Mammary epithelial cell (primary cell): ENCODE measurements at regions of chr10 and their contacts with region 1.

Region 1: GRCh38 chr10:3811291-3811870 is 26.4 kb upstream of the KLF6 start:
- DNase-seq: peak; percentile 98
- H3K4me3 ChIP-seq: no peak overlapping the region
- H3K27ac ChIP-seq: peak overlapping the region; percentile 100
- H3K4me1 ChIP-seq: peaks cover 50% of the 10 kb centered on the region
- H3K27me3 ChIP-seq: no peaks in the 10 kb centered on the region
- CTCF ChIP-seq: no peak

Region 2: DNA sequence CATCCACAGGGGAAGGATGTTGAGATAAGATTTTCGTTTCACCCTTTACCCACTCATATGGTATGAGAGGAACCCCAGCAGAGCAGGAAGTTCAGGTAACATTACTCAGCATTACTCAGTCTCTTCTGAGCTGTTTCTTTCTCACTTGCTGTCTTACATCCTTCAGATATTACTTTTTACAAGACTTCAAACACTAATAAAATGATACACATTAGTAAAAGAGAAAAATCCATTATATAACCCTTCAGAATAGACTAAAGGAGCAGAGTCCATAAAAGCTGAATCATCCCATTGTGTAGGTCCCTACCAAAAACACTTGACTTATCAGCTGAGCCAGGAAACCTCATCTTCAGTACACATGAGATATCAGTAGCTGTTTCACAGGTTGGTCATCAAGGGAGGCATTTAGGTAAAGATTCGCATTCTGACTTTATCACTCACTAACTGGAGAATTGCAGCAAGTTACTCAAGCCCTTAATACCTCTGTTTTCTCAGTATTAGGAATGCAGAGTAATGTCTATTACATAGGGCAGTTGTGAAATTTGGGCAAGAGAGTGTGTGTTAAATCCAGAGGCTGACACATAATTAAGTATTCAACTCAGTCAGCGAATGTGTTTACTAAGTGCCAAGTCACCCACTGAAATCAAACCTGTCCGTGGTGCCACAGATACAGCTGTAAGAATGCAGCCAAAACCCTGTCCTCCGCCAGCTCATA is 71.1 kb before region 1 on chr10:
- CTCF ChIA-PET with region 1: no interaction called
- dilution Hi-C with region 1: no loop called
- in situ Hi-C with region 1: no loop called
- intact Hi-C with region 1: loop called (anchors 1 kb)
- DNase-seq: peak; percentile 95
- H3K4me3 ChIP-seq: no peak overlapping the region
- H3K27ac ChIP-seq: peak overlapping the region; percentile 81
- H3K4me1 ChIP-seq: peaks cover 22% of the 10 kb centered on the region
- H3K27me3 ChIP-seq: no peaks in the 10 kb centered on the region
- CTCF ChIP-seq: no peak

Region 3: GRCh38 chr10:3828404-3829155 is 17.2 kb after region 1 on chr10:
- CTCF ChIA-PET with region 1: no interaction called
- dilution Hi-C with region 1: no loop called
- in situ Hi-C with region 1: no loop called
- intact Hi-C with region 1: loop called (anchors 1 kb)
- DNase-seq: peak; percentile 58
- H3K4me3 ChIP-seq: peak overlapping the region in 2 of 3 experiments; percentile 45 to 48
- H3K27ac ChIP-seq: peak overlapping the region; percentile 71
- H3K4me1 ChIP-seq: peaks cover 25% of the 10 kb centered on the region
- H3K27me3 ChIP-seq: no peaks in the 10 kb centered on the region
- CTCF ChIP-seq: no peak

Region 4: DNA sequence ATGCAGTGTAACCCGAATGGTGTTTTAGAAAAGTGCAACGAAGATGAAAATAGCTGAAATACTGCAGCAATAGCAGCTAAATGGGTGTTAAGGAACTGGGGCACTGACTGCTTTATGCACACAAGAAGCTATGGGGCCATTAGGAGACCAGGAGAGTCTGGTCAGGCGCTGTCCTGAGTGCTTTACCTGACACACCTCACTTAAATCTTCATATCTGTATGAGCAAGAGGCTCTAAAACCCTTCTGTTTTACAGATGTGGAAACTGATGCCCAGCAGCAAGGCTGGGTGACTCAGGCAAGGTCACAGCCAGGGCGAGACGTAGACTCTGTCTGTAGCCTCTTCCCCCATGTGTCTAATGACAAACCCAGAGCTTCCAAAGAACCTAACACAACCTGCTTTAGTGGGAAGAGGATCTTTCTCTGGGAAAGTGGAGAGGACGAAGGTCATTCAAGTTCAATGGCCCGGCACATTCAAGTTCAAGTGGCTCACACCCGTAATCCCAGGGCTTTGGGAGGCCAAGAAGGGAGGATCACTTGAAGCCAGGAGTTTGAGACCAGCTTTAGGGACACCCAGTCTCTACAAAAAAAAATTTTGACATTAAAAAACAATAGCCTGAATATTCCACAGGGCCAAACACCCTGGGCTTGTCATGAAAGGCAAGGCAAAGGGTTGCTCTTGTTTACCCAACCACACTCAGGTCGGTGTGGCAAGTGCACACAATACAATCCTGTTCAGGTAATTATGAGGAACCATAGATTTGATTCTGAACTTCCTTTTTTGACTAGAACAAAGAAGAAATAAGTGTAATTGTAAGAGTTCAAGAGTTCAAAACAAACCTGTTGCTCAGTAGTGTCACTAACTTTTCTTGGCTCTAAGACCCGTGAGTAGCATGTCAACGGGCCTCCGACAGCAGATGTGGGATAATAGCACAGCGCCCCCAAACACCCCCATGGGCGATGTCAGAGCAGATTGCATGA is 27.4 kb after region 1 on chr10:
- CTCF ChIA-PET with region 1: no interaction called
- dilution Hi-C with region 1: no loop called
- in situ Hi-C with region 1: no loop called
- intact Hi-C with region 1: no loop called
- DNase-seq: peak; percentile 36
- H3K4me3 ChIP-seq: no peak overlapping the region
- H3K27ac ChIP-seq: no peak overlapping the region
- H3K4me1 ChIP-seq: peaks cover 4% of the 10 kb centered on the region
- H3K27me3 ChIP-seq: no peaks in the 10 kb centered on the region
- CTCF ChIP-seq: no peak

Region 5: DNA sequence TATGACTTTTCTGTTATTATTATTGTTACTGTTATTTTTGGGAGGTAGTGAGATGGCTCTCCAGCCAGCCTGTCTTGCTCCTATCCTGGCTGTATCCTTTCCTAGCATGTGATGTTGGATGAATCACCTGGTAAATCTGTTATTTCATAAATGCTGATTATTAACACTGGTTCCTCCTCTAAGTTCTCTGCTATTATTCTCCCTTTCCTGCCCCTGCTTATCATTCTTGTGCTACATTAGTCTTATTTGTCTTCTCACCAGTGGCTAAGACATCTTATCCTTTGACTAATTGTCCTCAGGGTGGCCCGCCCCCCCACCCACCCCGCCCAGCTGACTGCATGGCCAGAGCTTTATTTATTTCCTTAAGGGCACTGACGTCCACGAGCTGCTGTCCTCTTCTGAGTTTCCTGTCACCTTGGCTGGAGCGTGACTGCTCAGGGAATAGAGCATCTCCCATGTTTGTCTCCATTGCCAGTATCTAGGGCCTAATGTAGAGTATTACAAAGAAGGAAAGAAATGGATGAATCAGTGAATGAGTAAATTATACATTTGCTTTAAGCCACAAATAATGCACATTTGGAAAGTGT is 83.8 kb after region 1 on chr10:
- CTCF ChIA-PET with region 1: no interaction called
- dilution Hi-C with region 1: no loop called
- in situ Hi-C with region 1: no loop called
- intact Hi-C with region 1: loop called (anchors 5 kb)
- DNase-seq: peak; percentile 80
- H3K4me3 ChIP-seq: no peak overlapping the region
- H3K27ac ChIP-seq: peak overlapping the region; percentile 60
- H3K4me1 ChIP-seq: peaks cover 50% of the 10 kb centered on the region
- H3K27me3 ChIP-seq: no peaks in the 10 kb centered on the region
- CTCF ChIP-seq: no peak

Region 6: GRCh38 chr10:4241724-4242345 is 430.5 kb after region 1 on chr10:
- CTCF ChIA-PET with region 1: no interaction called
- dilution Hi-C with region 1: loop called (anchors 10 kb)
- in situ Hi-C with region 1: no loop called
- intact Hi-C with region 1: loop called (anchors 2 kb)
- DNase-seq: peak; percentile 94
- H3K4me3 ChIP-seq: peak overlapping the region; percentile 27 to 51 (median 46)
- H3K27ac ChIP-seq: peak overlapping the region; percentile 97
- H3K4me1 ChIP-seq: peaks cover 47% of the 10 kb centered on the region
- H3K27me3 ChIP-seq: no peaks in the 10 kb centered on the region
- CTCF ChIP-seq: no peak

Region 7: GRCh38 chr10:4656576-4657182 is 845.3 kb after region 1 on chr10:
- CTCF ChIA-PET with region 1: no interaction called
- dilution Hi-C with region 1: no loop called
- in situ Hi-C with region 1: no loop called
- intact Hi-C with region 1: loop called (anchors 1 kb)
- DNase-seq: peak; percentile 52
- H3K4me3 ChIP-seq: no peak overlapping the region
- H3K27ac ChIP-seq: peak overlapping the region; percentile 37
- H3K4me1 ChIP-seq: peaks cover 10% of the 10 kb centered on the region
- H3K27me3 ChIP-seq: no peaks in the 10 kb centered on the region
- CTCF ChIP-seq: peak; percentile 89 to 91